ENCODE measurements at regions of chr2 and their contacts with region 1.

Region 1: GRCh38 chr2:160970052-160970965 is 189.9 kb upstream of the TANK start:
- DNase-seq: no peak
- ATAC-seq: no peak
- H3K4me3 Mint-ChIP-seq: no peak overlapping the region
- H3K27ac Mint-ChIP-seq: no peak overlapping the region
- H3K4me1 Mint-ChIP-seq: no peaks in the 10 kb centered on the region
- H3K27me3 Mint-ChIP-seq: peaks cover 20% of the 10 kb centered on the region

Region 2: DNA sequence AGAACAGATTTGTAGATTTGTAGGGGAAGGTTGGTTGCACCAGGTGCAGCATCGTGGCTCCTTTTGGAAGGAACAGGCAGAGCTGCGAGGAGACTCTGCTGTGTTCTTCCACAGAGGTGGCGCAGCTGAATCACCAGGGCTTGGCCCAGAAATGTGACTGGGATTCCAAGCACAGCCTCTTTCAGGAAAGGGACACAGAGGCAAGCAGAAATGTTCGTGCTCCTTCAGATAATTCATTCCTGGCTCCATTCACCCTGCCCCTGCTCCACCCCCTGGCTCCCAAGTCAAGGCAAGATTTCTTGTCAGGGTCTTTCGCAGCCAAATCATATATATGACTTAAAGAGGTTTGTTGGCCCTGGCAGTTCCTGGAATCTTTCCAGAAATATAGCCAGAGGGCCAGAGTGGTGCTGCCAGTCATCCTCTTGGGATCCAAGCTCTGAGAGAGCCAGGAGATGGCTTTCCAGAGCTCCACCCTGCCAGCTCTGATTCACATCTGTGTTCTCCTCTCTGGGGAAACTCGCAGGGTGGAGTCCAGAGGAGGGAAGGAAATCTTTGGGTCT is 14.0 kb before region 1 on chr2:
- CTCF ChIA-PET with region 1: interaction called, 12 read pairs
- POLR2A ChIA-PET with region 1: interaction called, 3 read pairs
- DNase-seq: no peak
- ATAC-seq: no peak
- H3K4me3 Mint-ChIP-seq: no peak overlapping the region
- H3K27ac Mint-ChIP-seq: no peak overlapping the region
- H3K4me1 Mint-ChIP-seq: no peaks in the 10 kb centered on the region
- H3K27me3 Mint-ChIP-seq: peaks cover 9% of the 10 kb centered on the region